Caco-2 (cell line): ENCODE measurements at regions of chr6 and their contacts with region 1.

Region 1: GRCh38 chr6:122033539-122034181 is 365.8 kb upstream of the HSF2 start:
- DNase-seq: peak in 1 of 2 experiments; percentile 51
- H3K4me3 ChIP-seq: no peak overlapping the region
- H3K4me3 Mint-ChIP-seq: no peak overlapping the region
- H3K27ac Mint-ChIP-seq: no peak overlapping the region
- H3K4me1 ChIP-seq: peaks cover 13% of the 10 kb centered on the region
- H3K4me1 Mint-ChIP-seq: peaks cover 24% of the 10 kb centered on the region
- H3K27me3 ChIP-seq: no peaks in the 10 kb centered on the region
- H3K27me3 Mint-ChIP-seq: no peaks in the 10 kb centered on the region
- CTCF ChIP-seq: peak in 1 of 2 experiments; percentile 32

Region 2: GRCh38 chr6:121319112-121319553 is 714.5 kb before region 1 on chr6:
- CTCF ChIA-PET with region 1: no interaction called
- POLR2A ChIA-PET with region 1: no interaction called
- intact Hi-C with region 1: loop called (anchors 1 kb)
- DNase-seq: peak in 1 of 2 experiments; percentile 26
- H3K4me3 ChIP-seq: no peak overlapping the region
- H3K4me3 Mint-ChIP-seq: peak overlapping the region; percentile 28
- H3K27ac Mint-ChIP-seq: no peak overlapping the region
- H3K4me1 ChIP-seq: no peaks in the 10 kb centered on the region
- H3K4me1 Mint-ChIP-seq: no peaks in the 10 kb centered on the region
- H3K27me3 ChIP-seq: no peaks in the 10 kb centered on the region
- H3K27me3 Mint-ChIP-seq: no peaks in the 10 kb centered on the region
- CTCF ChIP-seq: peak; percentile 54 to 57

Region 3: GRCh38 chr6:121436960-121437850 is 596.5 kb before region 1 on chr6:
- CTCF ChIA-PET with region 1: no interaction called
- POLR2A ChIA-PET with region 1: no interaction called
- intact Hi-C with region 1: loop called (anchors 1 kb)
- DNase-seq: peak; percentile 39 to 46
- H3K4me3 ChIP-seq: peak overlapping the region; percentile 56
- H3K4me3 Mint-ChIP-seq: peak overlapping the region; percentile 93
- H3K27ac Mint-ChIP-seq: peak overlapping the region; percentile 92
- H3K4me1 ChIP-seq: 0 out of 2 replicates have a peak, but pooled peaks cover 4% of the 10 kb centered on the region
- H3K4me1 Mint-ChIP-seq: peaks cover 12% of the 10 kb centered on the region
- H3K27me3 ChIP-seq: no peaks in the 10 kb centered on the region
- H3K27me3 Mint-ChIP-seq: no peaks in the 10 kb centered on the region
- CTCF ChIP-seq: no peak

Region 4: GRCh38 chr6:121680058-121680457 is 353.6 kb before region 1 on chr6:
- CTCF ChIA-PET with region 1: no interaction called
- POLR2A ChIA-PET with region 1: no interaction called
- intact Hi-C with region 1: loop called (anchors 5 kb)
- DNase-seq: no peak
- H3K4me3 ChIP-seq: no peak overlapping the region
- H3K4me3 Mint-ChIP-seq: no peak overlapping the region
- H3K27ac Mint-ChIP-seq: no peak overlapping the region
- H3K4me1 ChIP-seq: peaks cover 13% of the 10 kb centered on the region; the same call in 1 of the 2 replicates
- H3K4me1 Mint-ChIP-seq: no peaks in the 10 kb centered on the region
- H3K27me3 ChIP-seq: no peaks in the 10 kb centered on the region
- H3K27me3 Mint-ChIP-seq: no peaks in the 10 kb centered on the region
- CTCF ChIP-seq: no peak